Activated CD8-positive, alpha-beta T cell treated with anti-CD3 and anti-CD28 coated beads, Interleukin-2, amount 10 ng/mL, durations not matched to agents 7 days and 5 days (primary cell): ENCODE measurements at regions of chr18 and their contacts with region 1.

Region 1: GRCh38 chr18:3062798-3063680 is 50.1 kb upstream of the LPIN2 start:
- DNase-seq: peak; percentile 83
- ATAC-seq: peak; percentile 48
- H3K4me3 Mint-ChIP-seq: peak overlapping the region; percentile 17
- H3K27ac Mint-ChIP-seq: peak overlapping the region; percentile 95
- H3K4me1 Mint-ChIP-seq: peaks cover 67% of the 10 kb centered on the region
- H3K27me3 Mint-ChIP-seq: no peaks in the 10 kb centered on the region

Region 2: GRCh38 chr18:2932247-2933181 is 130.5 kb before region 1 on chr18:
- CTCF ChIA-PET with region 1: interaction called, 47 read pairs
- POLR2A ChIA-PET with region 1: no interaction called
- DNase-seq: peak; percentile 75
- ATAC-seq: peak; percentile 73
- H3K4me3 Mint-ChIP-seq: no peak overlapping the region
- H3K27ac Mint-ChIP-seq: peak overlapping the region; percentile 67
- H3K4me1 Mint-ChIP-seq: peaks cover 26% of the 10 kb centered on the region
- H3K27me3 Mint-ChIP-seq: no peaks in the 10 kb centered on the region

Region 3: GRCh38 chr18:2978646-2979045 is 84.4 kb before region 1 on chr18:
- CTCF ChIA-PET with region 1: interaction called, 22 read pairs
- POLR2A ChIA-PET with region 1: interaction called, 7 read pairs
- DNase-seq: no peak
- ATAC-seq: no peak
- H3K4me3 Mint-ChIP-seq: peak overlapping the region; percentile 81
- H3K27ac Mint-ChIP-seq: peak overlapping the region; percentile 80
- H3K4me1 Mint-ChIP-seq: peaks cover 73% of the 10 kb centered on the region
- H3K27me3 Mint-ChIP-seq: no peaks in the 10 kb centered on the region

Region 4: DNA sequence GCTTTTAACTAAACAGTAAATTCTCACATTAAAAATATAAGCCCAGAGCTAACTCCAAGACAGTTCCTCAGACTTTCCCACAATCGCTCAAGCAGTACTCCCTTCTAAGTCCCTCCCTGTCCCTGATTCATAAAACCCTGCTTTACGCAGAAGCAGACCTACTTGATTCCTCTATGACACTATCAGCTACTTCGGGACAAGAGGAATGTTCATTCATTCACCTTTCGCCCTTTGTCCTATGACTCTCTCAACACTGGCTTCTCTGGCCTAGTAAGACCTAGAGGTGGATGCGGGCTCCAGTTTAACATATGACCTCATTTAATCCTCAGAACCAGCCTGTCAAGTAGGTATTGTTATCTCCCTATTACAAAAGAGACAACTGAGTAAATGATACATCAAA is 60.3 kb before region 1 on chr18:
- CTCF ChIA-PET with region 1: interaction called, 311 read pairs
- POLR2A ChIA-PET with region 1: interaction called, 16 read pairs
- DNase-seq: no peak
- ATAC-seq: no peak
- H3K4me3 Mint-ChIP-seq: no peak overlapping the region
- H3K27ac Mint-ChIP-seq: no peak overlapping the region
- H3K4me1 Mint-ChIP-seq: peaks cover 44% of the 10 kb centered on the region
- H3K27me3 Mint-ChIP-seq: no peaks in the 10 kb centered on the region

Region 5: DNA sequence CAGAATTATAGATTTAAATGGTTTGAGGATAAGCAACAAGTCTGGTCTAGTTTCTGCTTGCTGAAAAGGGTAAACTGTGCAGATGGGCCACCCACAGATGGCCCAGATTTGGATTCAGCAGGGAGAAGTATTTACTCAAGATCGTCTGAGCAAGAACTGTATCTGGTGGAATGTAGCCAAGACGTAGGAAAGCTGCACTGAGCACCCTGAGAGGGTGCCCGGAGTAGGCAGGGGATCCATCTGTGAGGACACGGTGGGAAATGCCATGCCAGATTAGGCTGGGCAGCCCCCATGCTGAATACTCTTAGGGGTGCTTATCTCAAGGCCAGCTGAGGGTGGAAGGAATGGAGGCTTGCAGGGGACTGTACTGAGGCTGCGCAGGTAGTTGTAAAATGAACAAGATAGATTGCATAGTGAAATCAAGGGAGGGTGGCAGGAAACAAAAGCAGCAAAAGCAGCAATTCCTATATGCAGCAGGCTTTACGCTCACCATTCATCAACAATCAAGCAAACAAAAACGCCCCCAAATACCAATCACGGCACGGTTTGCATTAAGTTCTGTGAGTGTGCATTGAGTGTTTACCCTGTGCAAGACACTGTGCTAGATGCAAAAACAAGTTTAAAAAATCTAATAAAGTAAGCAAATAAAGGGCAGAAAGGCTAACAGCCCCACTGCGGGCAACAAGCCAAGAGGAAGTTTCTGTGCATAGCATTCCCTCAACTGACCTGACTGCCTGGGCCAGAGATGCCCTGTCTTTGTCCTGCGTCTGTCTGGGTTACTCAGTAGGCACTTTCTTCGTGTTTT is 17.9 kb before region 1 on chr18:
- CTCF ChIA-PET with region 1: interaction called, 15 read pairs
- POLR2A ChIA-PET with region 1: interaction called, 3 read pairs
- DNase-seq: no peak
- ATAC-seq: no peak
- H3K4me3 Mint-ChIP-seq: no peak overlapping the region
- H3K27ac Mint-ChIP-seq: no peak overlapping the region
- H3K4me1 Mint-ChIP-seq: peaks cover 19% of the 10 kb centered on the region
- H3K27me3 Mint-ChIP-seq: no peaks in the 10 kb centered on the region

Region 6: DNA sequence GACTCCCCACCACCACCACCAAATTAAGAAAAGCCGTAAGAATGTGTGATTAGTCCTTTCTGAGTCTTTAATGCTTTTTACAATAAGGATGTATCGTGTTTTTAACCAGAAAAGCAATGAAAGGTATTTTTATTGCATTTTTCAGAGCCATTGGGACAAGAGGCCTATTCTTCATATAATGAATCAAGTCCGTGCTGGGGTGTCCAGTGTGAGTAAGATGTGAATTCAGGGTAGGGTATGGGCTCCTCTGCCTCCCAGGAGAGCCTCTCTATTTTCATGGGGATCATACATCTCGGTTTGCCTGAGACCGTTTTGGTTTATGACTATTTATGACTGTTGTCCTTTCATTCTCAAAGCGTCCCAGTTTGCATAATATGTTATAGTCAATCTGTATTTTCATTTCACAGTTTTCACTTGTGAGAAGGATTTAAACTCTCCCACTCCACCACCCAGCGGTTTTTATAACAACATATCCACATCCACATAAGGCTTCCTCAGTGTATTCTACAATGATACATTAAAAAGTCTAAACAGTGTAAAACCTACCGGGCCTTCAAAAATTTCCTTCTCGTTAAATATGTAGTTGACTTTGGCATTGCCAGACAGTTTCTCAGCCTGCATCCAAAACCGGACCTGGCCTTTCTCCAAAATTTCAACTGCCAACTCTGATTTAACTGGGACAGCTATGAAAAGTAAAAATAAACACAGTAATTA is 30.7 kb after region 1 on chr18:
- CTCF ChIA-PET with region 1: interaction called, 27 read pairs
- POLR2A ChIA-PET with region 1: interaction called, 5 read pairs
- DNase-seq: no peak
- ATAC-seq: no peak
- H3K4me3 Mint-ChIP-seq: no peak overlapping the region
- H3K27ac Mint-ChIP-seq: no peak overlapping the region
- H3K4me1 Mint-ChIP-seq: peaks cover 31% of the 10 kb centered on the region
- H3K27me3 Mint-ChIP-seq: no peaks in the 10 kb centered on the region

Region 7: DNA sequence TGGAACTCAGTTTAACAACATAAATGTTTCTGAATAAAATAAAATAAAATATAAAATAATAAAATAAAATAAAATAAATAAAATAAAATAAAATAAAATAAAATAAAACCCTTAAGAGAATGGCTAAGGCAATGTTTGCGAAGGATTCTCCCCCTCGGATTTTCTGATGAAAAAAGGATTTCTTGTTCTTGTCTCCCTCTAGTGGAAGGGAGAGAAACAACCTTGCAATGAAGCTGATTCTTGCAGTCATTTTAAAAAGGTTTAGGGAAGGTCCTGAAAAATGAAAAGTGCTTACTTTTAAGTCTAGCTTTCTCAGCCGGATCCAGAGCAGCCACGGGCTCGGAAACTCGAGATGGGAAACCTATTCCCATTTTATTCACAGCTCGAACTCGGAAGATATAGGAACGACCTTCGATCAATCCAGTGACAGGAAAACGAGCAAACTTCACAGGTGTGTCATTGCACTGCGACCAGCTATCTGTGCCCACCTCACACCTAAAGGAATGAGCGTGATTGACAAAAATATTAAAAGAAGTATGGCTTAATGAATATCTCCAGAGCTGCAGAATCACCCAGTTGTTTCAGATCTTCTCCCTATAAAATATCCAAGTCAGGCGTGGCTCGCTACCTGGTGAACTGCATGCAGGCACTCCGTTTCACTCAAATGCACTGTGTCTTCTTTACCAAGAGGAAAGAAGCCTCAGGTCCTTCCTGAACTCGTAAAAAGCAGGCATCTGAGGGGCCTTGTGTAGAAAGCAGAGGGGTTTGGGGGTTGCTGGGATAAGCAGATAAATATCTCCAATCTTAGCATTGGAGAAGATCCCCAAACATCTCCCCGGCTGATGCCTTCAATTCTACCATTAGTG is 88.6 kb after region 1 on chr18:
- CTCF ChIA-PET with region 1: interaction called, 13 read pairs
- POLR2A ChIA-PET with region 1: no interaction called
- DNase-seq: no peak
- ATAC-seq: no peak
- H3K4me3 Mint-ChIP-seq: no peak overlapping the region
- H3K27ac Mint-ChIP-seq: no peak overlapping the region
- H3K4me1 Mint-ChIP-seq: no peaks in the 10 kb centered on the region
- H3K27me3 Mint-ChIP-seq: no peaks in the 10 kb centered on the region